A549 (cell line): ENCODE measurements at regions of chr15 and their contacts with region 1.

Region 1: DNA sequence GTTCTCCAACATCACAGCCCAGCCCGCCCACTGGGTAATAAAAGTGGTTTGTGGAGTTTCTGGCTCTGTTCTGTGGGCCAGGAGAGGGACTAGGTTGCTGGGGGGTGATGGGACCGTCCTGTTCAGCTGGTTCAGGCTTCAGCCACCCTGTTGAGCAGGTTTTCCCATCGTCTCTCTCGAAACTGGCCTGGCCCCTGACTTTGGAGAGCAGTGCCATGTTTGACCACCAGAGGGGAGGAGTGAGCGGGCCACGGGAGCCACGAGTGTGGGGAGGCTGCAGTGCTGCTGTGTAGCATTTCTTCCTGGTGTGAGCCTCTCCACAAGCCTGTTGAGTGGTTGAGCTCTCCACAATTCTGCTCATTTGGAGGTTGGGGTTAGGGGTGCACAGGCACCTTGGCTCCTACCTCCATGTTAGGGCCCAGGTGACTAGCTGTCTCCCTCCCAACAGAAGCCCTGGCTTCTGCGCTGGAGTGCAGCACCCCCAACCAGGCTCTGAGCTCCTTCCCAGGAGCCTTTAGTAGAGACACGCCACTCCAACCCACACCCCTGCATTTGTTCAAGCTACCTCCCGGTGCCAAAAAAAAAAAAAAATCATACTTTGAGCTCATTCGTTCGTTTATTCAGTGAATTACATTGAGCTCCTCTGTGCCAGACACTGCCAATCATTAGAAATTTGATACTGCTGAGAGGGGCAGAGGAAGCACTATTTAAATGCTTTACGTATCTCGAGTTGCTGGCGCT is 13.9 kb downstream of the SPINT1 start:
- DNase-seq: peak; percentile 64 to 88
- ATAC-seq: peak; percentile 86 to 90
- H3K4me3 ChIP-seq: no peak overlapping the region
- H3K27ac ChIP-seq: peak overlapping the region; percentile 59 to 76
- H3K4me1 ChIP-seq: peaks cover 41% of the 10 kb centered on the region
- CTCF ChIP-seq: peak; percentile 75
- EP300 ChIP-seq: no peak
- POLR2A ChIP-seq: 0 out of 2 replicates have a peak, but pooled peaks have one; percentile 8
- RAD21 ChIP-seq: peak; percentile 76 to 81

Region 2: GRCh38 chr15:40743921-40744814 is 113.6 kb before region 1 on chr15:
- CTCF ChIA-PET with region 1: interaction called, 15 read pairs
- POLR2A ChIA-PET with region 1: no interaction called
- DNase-seq: peak in 1 of 2 experiments; percentile 56
- ATAC-seq: peak; percentile 58 to 75
- H3K4me3 ChIP-seq: no peak overlapping the region
- H3K27ac ChIP-seq: peak overlapping the region in 1 of 2 experiments; percentile 8; a peak in 2 of 6 replicates
- H3K4me1 ChIP-seq: peaks cover 14% of the 10 kb centered on the region
- CTCF ChIP-seq: no peak
- EP300 ChIP-seq: no peak
- POLR2A ChIP-seq: no peak
- RAD21 ChIP-seq: no peak

Region 3: DNA sequence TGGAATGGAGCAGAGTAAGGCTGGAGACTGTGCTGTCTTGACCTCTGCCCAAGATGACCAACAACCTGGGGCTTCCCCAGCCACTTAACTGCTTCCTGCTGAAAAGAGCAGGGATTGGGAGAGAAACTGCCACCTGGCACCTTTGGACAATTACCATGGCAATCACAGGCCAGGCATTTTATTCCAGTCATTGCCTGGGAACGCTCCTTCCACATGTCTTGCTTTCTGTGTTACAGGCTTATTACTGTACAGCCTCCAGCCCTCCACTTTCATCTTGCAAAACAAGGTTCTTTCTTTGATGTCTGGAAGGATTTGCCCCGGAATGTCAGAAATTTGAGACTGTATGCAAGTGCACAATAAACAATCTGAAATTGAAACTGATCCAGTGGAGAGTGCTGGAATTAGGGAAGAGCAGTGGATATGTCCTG is 32.1 kb before region 1 on chr15:
- CTCF ChIA-PET with region 1: interaction called, 11 read pairs
- POLR2A ChIA-PET with region 1: no interaction called
- DNase-seq: peak in 1 of 2 experiments; percentile 57
- ATAC-seq: peak; percentile 49 to 74; a peak in 3 of 6 replicates
- H3K4me3 ChIP-seq: no peak overlapping the region
- H3K27ac ChIP-seq: peak overlapping the region in 1 of 2 experiments; percentile 66; a peak in 3 of 6 replicates
- H3K4me1 ChIP-seq: peaks cover 39% of the 10 kb centered on the region
- CTCF ChIP-seq: no peak
- EP300 ChIP-seq: no peak
- POLR2A ChIP-seq: no peak
- RAD21 ChIP-seq: no peak

Region 4: GRCh38 chr15:40838776-40839175 is 19.0 kb before region 1 on chr15:
- CTCF ChIA-PET with region 1: interaction called, 82 read pairs
- POLR2A ChIA-PET with region 1: no interaction called
- DNase-seq: no peak
- ATAC-seq: no peak
- H3K4me3 ChIP-seq: no peak overlapping the region
- H3K27ac ChIP-seq: no peak overlapping the region
- H3K4me1 ChIP-seq: peaks cover 17% of the 10 kb centered on the region
- CTCF ChIP-seq: no peak
- EP300 ChIP-seq: no peak
- POLR2A ChIP-seq: no peak
- RAD21 ChIP-seq: no peak

Region 5: DNA sequence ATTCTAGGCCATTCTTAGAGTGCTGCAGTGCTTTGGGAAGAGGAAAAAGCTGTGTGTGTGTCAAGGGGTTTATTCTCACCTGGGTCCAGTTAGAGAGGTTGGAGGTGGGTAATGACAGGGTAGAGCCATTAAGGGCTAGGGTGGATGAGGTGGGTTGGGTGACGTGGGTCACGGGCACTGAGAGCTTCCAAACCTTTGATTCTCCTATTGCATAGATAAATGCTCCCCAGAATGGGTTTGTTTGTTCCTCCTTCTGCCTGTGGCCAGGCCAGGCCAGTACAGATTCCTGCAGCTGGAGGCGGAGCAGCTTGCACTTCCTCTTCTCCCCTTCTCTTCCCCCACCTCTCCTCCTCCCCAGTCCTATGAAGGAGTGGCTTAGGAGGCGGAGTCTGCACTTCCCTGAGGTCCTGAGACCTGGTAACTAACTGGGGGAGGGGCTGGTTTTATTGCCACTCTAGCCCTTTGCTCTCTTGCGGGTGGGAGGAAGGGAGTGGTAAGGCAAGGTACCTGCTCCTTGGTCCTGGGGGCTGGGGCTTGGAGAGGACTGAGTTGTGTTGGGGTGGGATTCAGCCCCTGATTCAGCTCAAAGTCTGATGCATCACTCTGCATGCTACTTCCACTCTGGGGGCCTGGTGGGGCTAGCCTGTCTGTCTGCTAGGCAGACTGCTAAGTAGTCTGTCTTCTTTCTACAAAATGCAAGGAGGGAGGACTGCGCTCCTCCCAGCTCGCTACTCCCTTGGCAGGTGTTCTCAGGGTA is 10.4 kb before region 1 on chr15:
- CTCF ChIA-PET with region 1: interaction called, 82 read pairs
- POLR2A ChIA-PET with region 1: no interaction called
- DNase-seq: peak; percentile 38 to 64
- ATAC-seq: peak; percentile 78 to 91; a peak in 5 of 6 replicates
- H3K4me3 ChIP-seq: no peak overlapping the region
- H3K27ac ChIP-seq: peak overlapping the region; percentile 8 to 58; a peak in 4 of 6 replicates
- H3K4me1 ChIP-seq: peaks cover 23% of the 10 kb centered on the region
- CTCF ChIP-seq: no peak
- EP300 ChIP-seq: no peak
- POLR2A ChIP-seq: no peak
- RAD21 ChIP-seq: no peak

Region 6: GRCh38 chr15:40873625-40874561 is 16.1 kb after region 1 on chr15 and contains the start of gene RHOV:
- CTCF ChIA-PET with region 1: no interaction called
- POLR2A ChIA-PET with region 1: interaction called, 17 read pairs
- DNase-seq: peak; percentile 76 to 83
- ATAC-seq: peak; percentile 95 to 96
- H3K4me3 ChIP-seq: peak within 1 kb of the TSS; percentile 92
- H3K27ac ChIP-seq: peak within 1 kb of the TSS; percentile 93 to 99
- H3K4me1 ChIP-seq: peaks cover 18% of the 10 kb centered on the region
- CTCF ChIP-seq: peak; percentile 40
- EP300 ChIP-seq: no peak
- POLR2A ChIP-seq: peak; percentile 57
- RAD21 ChIP-seq: peak; percentile 26 to 36; a peak in 3 of 5 replicates
- polyA plus RNA-seq, gene RHOV: 13.0 and 13.9 TPM in 2 replicates

Region 7: DNA sequence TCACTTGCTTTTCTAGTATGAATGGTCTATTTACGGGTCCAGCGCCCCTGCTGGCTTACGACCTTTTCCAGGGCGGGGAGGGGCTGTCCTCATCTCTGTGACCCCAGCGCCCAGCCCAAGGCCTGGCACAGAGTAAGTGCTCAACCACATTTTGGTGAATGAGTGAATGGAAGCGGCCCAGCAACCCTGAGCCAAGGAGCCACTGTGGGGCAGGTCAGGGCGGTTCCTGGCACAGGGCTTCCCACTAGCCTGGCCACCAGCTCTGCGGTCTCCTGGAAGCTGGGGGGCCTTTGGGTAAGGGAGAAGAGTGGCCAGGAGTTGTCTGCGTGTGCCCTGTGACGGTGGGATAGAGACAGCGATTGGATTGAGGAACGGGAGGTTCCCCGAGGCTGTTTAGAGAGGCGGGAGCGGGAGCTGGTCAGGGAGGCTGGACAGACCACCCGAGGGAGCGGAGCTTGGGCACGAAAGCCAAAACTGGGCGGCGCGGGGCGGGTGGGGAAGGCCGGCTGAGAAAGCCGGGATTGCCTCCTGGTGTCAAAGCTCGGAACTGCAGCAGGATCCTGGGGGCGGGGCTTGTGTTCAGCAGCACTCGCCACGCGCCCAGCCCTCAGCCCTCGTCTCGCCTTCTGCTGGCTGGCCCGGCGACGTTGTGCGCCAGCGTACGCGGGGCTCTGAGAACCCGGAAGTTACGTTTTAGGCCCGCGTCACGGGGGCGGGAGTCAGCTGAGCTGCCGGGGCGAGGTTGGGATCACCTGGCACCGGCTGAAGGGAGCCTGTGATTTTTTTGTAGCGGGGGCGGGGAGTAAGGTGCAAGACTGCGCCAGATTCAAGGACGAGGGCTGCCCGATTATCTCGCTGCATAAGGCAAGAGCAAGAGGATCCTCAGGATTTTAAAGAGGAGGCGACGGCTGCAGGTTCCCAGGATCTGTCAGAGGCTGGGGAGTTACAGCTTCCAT is 36.2 kb after region 1 on chr15 and contains the start of gene VPS18:
- CTCF ChIA-PET with region 1: interaction called, 254 read pairs
- POLR2A ChIA-PET with region 1: interaction called, 19 read pairs
- DNase-seq: peak; percentile 72 to 95
- ATAC-seq: peak; percentile 95 to 96
- H3K4me3 ChIP-seq: peak within 1 kb of the TSS; percentile 79
- H3K27ac ChIP-seq: peak within 1 kb of the TSS; percentile 88 to 91
- H3K4me1 ChIP-seq: peaks cover 12% of the 10 kb centered on the region
- CTCF ChIP-seq: peak; percentile 68
- EP300 ChIP-seq: no peak
- POLR2A ChIP-seq: peak; percentile 47
- RAD21 ChIP-seq: peak; percentile 75 to 92
- polyA plus RNA-seq, gene VPS18: 9.0 and 10.7 TPM in 2 replicates